ENCODE measurements at regions of chr10 and their contacts with region 1.

Region 1: DNA sequence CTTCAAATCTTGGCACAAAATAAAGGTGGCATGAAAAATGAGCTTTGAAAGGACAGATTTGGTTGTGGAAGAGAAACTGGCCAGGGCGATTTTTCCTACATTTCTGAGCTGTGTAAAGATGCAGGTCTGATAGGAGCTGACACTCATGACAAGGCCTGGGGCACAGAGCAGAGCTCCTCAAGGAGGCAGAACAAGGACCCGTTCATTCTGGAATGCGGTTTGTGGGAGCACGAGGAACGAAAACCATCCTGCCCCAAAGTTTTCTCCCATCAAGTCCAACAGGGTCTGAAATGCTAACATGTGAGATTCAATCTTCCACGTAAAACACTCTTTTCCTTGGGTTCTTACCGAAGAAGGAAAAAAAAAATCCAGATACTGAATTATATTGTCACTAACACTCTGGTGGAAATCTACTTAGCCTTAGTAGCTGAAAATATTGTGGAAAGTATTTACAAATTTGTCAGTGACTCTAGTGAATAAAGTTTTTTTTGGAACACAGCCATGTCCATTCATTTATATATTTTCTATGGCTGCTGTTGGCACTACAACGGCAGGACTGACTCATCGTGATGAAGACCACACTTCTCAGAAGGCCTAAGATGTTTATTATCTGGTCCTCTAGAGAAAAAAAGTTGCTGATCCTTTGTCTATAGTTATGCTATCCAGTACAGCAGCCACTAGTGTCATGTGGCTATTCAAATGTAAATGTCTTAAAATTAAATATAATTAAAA is 215.7 kb downstream of the BAMBI start:
- DNase-seq: no peak
- H3K4me3 Mint-ChIP-seq: no peak overlapping the region
- H3K27ac Mint-ChIP-seq: no peak overlapping the region
- H3K4me1 Mint-ChIP-seq: no peaks in the 10 kb centered on the region
- H3K27me3 Mint-ChIP-seq: no peaks in the 10 kb centered on the region

Region 2: DNA sequence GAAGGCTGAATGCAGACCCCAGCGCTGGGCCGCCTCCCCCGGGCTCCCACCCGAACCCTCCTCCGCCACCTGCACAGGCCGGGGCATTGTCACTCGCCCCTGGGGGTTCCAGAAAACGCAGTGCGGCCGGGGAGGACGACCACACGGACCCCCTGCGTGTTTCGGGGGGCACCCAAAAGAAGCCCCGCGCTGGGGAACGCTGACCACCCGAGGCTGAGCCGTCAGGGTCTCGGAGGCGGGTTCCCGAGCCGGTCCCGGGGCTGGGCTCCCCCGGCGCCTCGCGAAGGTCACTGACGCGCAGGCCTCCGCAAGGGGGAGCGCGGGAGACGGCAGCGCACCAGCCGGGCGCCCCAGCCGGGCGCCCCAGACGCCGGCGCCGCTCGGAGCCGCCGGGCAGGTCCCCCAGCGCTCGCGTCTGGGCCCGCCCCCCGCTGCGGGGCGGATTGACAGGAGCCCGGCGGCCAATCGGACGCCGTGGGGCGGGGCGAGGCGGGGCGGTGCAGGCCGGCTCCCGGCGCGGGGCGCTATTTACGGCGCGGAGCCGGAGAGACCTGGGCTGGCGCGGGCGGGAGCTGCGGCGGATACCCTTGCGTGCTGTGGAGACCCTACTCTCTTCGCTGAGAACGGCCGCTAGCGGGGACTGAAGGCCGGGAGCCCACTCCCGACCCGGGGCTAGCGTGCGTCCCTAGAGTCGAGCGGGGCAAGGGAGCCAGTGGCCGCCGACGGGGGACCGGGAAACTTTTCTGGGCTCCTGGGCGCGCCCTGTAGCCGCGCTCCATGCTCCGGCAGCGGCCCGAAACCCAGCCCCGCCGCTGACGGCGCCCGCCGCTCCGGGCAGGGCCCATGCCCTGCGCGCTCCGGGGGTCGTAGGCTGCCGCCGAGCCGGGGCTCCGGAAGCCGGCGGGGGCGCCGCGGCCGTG is 215.8 kb before region 1 on chr10 and contains the start of gene BAMBI:
- intact Hi-C with region 1: loop called (anchors 5 kb)
- DNase-seq: peak; percentile 88
- H3K4me3 Mint-ChIP-seq: peak within 1 kb of the TSS; percentile 74
- H3K27ac Mint-ChIP-seq: no peak within 1 kb of the TSS
- H3K4me1 Mint-ChIP-seq: peaks cover 26% of the 10 kb centered on the region
- H3K27me3 Mint-ChIP-seq: peaks cover 73% of the 10 kb centered on the region
- total RNA-seq, gene BAMBI: 0.16 TPM in 2 replicates

Measured in activated T-helper 2 cell treated with anti-CD3 and anti-CD28 coated beads, Interferon-gamma antibody, Interleukin-2, Interleukin-4, amounts not matched to agents 10 μg/mL and 5 μg/mL and 100 μg/mL, durations not matched to agents 14 hours and 24 hours and 36 hours (primary cell).